ENCODE measurements at regions of chr9 and their contacts with region 1.

Region 1: DNA sequence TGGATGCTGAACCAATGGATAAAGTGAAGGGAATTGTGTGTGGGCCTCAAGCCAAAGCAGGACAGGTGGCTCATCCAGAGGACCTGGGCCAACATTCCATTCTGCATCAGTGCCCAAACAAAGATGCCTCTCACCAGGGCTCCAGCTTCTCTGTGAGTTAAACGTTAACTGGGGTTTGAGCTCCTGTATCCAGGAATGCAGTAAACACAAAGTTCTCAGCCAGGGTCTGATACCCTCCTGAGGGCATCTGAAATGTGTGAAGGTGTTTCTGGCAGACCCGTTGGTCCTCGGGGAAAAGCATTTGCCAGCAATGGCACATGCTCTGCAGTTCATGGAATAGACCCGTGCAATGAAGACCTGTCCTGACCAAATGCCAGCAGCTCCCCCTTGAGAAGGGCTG is 33.9 kb upstream of the AOPEP start:
- DNase-seq: peak; percentile 87 to 90
- H3K4me3 ChIP-seq: no peak overlapping the region
- H3K4me3 Mint-ChIP-seq: no peak overlapping the region
- H3K27ac Mint-ChIP-seq: peak overlapping the region; percentile 70
- H3K4me1 ChIP-seq: peaks cover 50% of the 10 kb centered on the region
- H3K4me1 Mint-ChIP-seq: peaks cover 31% of the 10 kb centered on the region
- H3K27me3 ChIP-seq: no peaks in the 10 kb centered on the region
- H3K27me3 Mint-ChIP-seq: no peaks in the 10 kb centered on the region
- CTCF ChIP-seq: no peak

Region 2: GRCh38 chr9:94586814-94587213 is 105.8 kb before region 1 on chr9:
- CTCF ChIA-PET with region 1: no interaction called
- POLR2A ChIA-PET with region 1: no interaction called
- intact Hi-C with region 1: no loop called
- DNase-seq: no peak
- H3K4me3 ChIP-seq: no peak overlapping the region
- H3K4me3 Mint-ChIP-seq: no peak overlapping the region
- H3K27ac Mint-ChIP-seq: no peak overlapping the region
- H3K4me1 ChIP-seq: no peaks in the 10 kb centered on the region
- H3K4me1 Mint-ChIP-seq: peaks cover 6% of the 10 kb centered on the region
- H3K27me3 ChIP-seq: no peaks in the 10 kb centered on the region
- H3K27me3 Mint-ChIP-seq: no peaks in the 10 kb centered on the region
- CTCF ChIP-seq: no peak

Region 3: DNA sequence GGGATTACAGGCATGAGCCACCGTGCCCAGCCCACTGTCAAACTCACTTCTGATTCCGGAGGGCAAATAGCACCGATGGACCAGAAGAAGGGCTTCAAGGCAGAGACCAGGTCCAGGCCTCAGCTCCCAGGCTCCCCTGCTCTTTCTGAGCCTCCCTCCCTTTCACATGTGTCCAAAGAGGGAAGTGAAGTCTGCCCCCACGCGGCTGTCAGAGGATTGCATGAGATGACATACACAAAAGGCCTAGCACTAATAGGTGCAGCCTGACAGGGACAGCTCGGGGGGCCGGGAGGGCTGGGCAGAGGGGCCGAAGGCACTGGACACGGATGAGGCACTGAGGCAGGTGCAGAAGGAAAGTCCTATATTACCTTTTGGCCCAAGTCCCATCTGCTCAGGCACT is 69.3 kb before region 1 on chr9:
- CTCF ChIA-PET with region 1: no interaction called
- POLR2A ChIA-PET with region 1: no interaction called
- intact Hi-C with region 1: no loop called
- DNase-seq: peak; percentile 67 to 72
- H3K4me3 ChIP-seq: no peak overlapping the region
- H3K4me3 Mint-ChIP-seq: no peak overlapping the region
- H3K27ac Mint-ChIP-seq: no peak overlapping the region
- H3K4me1 ChIP-seq: no peaks in the 10 kb centered on the region; the same call in 1 of the 2 replicates
- H3K4me1 Mint-ChIP-seq: no peaks in the 10 kb centered on the region
- H3K27me3 ChIP-seq: no peaks in the 10 kb centered on the region
- H3K27me3 Mint-ChIP-seq: no peaks in the 10 kb centered on the region
- CTCF ChIP-seq: peak; percentile 52 to 71

Region 4: GRCh38 chr9:94656200-94656599 is 36.4 kb before region 1 on chr9:
- CTCF ChIA-PET with region 1: no interaction called
- POLR2A ChIA-PET with region 1: no interaction called
- intact Hi-C with region 1: no loop called
- DNase-seq: no peak
- H3K4me3 ChIP-seq: no peak overlapping the region
- H3K4me3 Mint-ChIP-seq: no peak overlapping the region
- H3K27ac Mint-ChIP-seq: no peak overlapping the region
- H3K4me1 ChIP-seq: no peaks in the 10 kb centered on the region
- H3K4me1 Mint-ChIP-seq: no peaks in the 10 kb centered on the region
- H3K27me3 ChIP-seq: no peaks in the 10 kb centered on the region
- H3K27me3 Mint-ChIP-seq: no peaks in the 10 kb centered on the region
- CTCF ChIP-seq: no peak

Region 5: GRCh38 chr9:94746541-94747370 is 54.2 kb after region 1 on chr9:
- CTCF ChIA-PET with region 1: no interaction called
- POLR2A ChIA-PET with region 1: no interaction called
- intact Hi-C with region 1: loop called (anchors 1 kb)
- DNase-seq: peak; percentile 46 to 73
- H3K4me3 ChIP-seq: no peak overlapping the region
- H3K4me3 Mint-ChIP-seq: peak overlapping the region; percentile 33
- H3K27ac Mint-ChIP-seq: peak overlapping the region; percentile 15
- H3K4me1 ChIP-seq: peaks cover 29% of the 10 kb centered on the region
- H3K4me1 Mint-ChIP-seq: peaks cover 14% of the 10 kb centered on the region
- H3K27me3 ChIP-seq: no peaks in the 10 kb centered on the region
- H3K27me3 Mint-ChIP-seq: no peaks in the 10 kb centered on the region
- CTCF ChIP-seq: no peak

Region 6: DNA sequence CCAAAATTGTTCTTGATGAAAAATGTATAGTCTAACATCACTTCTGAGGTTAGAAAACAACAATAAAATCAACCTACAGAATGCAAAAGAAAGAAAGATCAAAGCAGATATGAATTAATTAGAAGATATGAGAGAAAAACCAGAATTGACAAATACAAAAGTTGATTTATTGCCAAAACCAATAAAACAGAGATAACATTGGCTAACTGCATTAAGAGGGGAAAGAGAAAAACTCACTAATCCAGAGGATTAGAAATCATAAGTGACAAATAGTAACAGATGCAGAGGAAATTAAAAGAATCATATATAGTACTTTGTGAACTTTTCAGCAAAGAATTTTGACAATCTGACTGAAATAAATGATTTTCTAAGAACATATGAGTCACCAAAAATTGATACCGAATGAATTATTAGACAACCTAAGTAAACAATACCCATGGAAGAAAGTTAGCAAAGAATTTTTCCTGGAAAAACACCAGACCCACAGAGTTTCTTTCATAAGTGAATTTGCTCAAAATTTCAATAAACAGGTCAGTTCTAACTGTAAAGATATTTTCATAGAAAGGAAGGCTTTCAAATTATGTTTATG is 201.6 kb after region 1 on chr9:
- CTCF ChIA-PET with region 1: no interaction called
- POLR2A ChIA-PET with region 1: no interaction called
- intact Hi-C with region 1: no loop called
- DNase-seq: no peak
- H3K4me3 ChIP-seq: no peak overlapping the region
- H3K4me3 Mint-ChIP-seq: no peak overlapping the region
- H3K27ac Mint-ChIP-seq: no peak overlapping the region
- H3K4me1 ChIP-seq: peaks cover 11% of the 10 kb centered on the region; the same call in 1 of the 2 replicates
- H3K4me1 Mint-ChIP-seq: peaks cover 15% of the 10 kb centered on the region
- H3K27me3 ChIP-seq: no peaks in the 10 kb centered on the region
- H3K27me3 Mint-ChIP-seq: no peaks in the 10 kb centered on the region
- CTCF ChIP-seq: no peak